Common myeloid progenitor, CD34-positive (primary cell): ENCODE measurements at regions of chr7 and their contacts with region 1.

Region 1: DNA sequence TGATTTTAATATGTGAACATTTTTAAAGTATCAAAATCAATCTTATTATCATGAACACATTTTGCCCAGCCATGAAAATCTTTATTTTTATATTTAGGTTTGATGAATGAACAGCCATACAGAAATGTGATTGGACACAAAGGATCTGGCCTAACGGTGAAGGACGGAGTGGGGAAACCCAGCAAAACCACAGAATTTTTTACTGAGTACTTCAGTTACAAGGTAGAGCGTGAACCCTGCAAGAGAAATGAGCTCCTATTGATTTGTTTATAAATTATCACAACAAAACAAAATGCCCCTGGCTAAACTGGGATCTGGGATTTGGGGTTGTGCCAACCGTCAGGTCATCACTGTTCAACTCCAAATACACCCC is 118.8 kb downstream of the JAZF1 start:
- DNase-seq: no peak
- H3K4me3 ChIP-seq: no peak overlapping the region
- H3K27ac ChIP-seq: no peak overlapping the region
- H3K4me1 ChIP-seq: peaks cover 0 to 7% (median 0%) of the 10 kb centered on the region in 4 experiments
- H3K27me3 ChIP-seq: peaks cover 0 to under 1% (median 0%) of the 10 kb centered on the region in 5 experiments

Region 2: DNA sequence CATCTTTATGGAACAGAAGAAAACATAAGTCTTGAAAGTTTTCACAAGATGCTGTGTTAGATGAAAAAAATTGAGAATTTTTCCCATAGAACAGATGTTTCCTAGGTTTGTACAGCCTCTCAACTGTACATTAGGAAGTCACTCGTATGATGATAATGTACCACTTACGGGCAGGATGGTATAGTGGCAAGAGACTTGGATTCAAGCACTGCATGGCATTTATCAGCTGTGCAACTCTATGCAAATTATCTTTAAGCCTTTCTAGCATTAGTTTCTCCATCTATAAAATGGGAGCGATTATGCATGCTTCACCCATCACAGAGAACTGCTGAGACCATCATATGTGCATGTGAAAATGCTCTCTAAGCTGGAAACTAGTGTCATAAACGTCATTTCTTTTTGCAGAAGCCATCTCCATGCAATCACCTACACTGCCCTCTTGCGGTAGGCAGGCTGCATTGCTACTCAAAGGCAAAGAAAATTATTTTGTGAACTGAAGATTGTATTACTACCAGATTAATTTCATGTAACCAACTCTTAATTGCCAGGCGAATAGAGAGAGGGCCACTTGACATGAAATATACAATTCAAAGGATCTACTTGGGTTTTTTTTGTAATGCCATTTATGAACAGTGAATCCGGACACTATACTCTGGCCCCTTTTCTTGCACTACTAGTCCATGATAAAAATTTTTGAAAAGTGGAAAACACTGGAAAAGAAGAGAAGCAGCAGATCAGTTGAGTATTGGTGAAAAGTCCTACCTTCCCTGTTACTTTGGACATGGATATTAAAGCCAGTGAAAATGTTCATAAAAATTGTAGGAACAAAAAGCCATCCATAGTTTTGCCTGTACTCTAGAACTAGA is 16.5 kb after region 1 on chr7:
- CTCF ChIA-PET with region 1: interaction called, 11 read pairs
- POLR2A ChIA-PET with region 1: no interaction called
- DNase-seq: peak; percentile 40 to 71 (median 71)
- H3K4me3 ChIP-seq: no peak overlapping the region
- H3K27ac ChIP-seq: no peak overlapping the region
- H3K4me1 ChIP-seq: peaks cover 0 to 12% (median 6%) of the 10 kb centered on the region in 4 experiments
- H3K27me3 ChIP-seq: no peaks in the 10 kb centered on the region